ENCODE measurements at regions of chr6 and their contacts with region 1.

Region 1: DNA sequence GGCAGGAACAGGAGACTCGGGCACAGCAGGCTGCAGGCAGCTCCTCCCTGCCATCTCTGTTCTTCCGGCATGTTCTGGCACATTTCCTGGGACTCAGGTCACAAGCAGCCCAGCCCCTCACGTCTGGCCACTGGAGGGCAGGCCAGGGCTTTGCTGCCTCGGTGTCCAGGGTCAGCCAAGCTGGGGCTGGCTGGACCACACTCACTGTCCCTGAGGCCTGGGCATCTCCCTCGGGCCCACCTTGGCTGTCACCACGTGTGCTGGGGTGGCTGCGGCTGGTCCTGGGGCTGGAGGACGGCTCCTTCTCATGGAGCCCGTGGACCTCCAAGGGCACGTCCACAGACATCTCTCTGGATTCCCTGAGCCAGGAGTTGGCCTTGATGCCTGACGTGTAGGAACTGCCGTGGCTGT is 18.5 kb downstream of the FRMD1 start:
- DNase-seq: no peak
- ATAC-seq: peak; percentile 71
- H3K4me3 ChIP-seq: no peak overlapping the region
- H3K27ac ChIP-seq: no peak overlapping the region; the same call in 1 of the 2 replicates
- H3K4me1 ChIP-seq: no peaks in the 10 kb centered on the region
- H3K27me3 ChIP-seq: no peaks in the 10 kb centered on the region
- CTCF ChIP-seq: peak; percentile 34 to 67 (median 55); a peak in 5 of 6 replicates
- POLR2A ChIP-seq: no peak
- RAD21 ChIP-seq: peak; percentile 73

Region 2: DNA sequence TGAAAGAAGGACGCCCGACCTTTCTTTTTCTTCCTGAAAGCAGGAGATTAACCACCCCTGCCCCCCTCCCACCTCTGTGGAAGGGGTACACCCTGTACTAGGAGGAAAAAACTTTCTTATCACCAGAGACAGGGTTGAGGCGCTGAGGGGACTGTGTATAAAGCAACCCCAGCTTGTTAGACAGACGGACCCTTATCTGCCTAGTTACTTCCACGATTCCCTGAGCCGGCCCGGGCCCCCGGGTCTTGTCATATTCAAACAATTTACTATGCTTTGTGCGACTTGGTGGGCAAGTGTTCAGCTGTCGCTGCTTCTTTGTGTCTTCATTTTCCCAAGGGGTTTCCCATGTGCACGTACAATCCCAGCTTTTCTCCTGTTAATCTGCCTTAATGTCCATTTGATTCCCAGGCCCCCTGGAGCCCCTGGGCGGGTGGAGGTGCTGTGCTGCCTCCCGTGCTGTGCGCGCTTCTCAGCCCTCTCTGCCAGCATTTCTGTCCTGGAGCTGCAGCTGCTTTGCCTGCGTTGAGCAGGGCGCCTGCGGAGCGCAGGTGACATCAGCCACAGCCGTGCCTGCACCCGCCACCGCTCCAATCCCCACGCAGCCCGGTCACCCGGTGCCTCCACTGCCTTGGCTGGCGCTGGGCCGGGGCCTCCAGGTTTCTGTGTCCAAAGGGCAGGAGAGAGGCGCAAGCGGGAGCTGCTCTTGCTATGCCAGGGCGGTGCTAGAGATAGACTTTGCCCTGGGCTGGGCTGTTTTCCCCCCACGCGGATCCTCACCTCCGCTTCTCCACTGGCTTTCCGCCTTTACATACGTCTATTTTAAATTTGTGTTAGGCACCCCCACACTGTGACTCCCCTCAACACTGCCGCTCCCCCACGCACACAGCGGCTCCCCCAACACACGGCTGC is 639.4 kb before region 1 on chr6:
- CTCF ChIA-PET with region 1: no interaction called
- POLR2A ChIA-PET with region 1: no interaction called
- RAD21 ChIA-PET with region 1: no interaction called
- intact Hi-C with region 1: no loop called
- DNase-seq: no peak
- ATAC-seq: no peak
- H3K4me3 ChIP-seq: no peak overlapping the region
- H3K27ac ChIP-seq: no peak overlapping the region
- H3K4me1 ChIP-seq: no peaks in the 10 kb centered on the region
- H3K27me3 ChIP-seq: peaks cover 29% of the 10 kb centered on the region; the same call in 1 of the 2 replicates
- CTCF ChIP-seq: no peak
- POLR2A ChIP-seq: no peak
- RAD21 ChIP-seq: no peak

Region 3: DNA sequence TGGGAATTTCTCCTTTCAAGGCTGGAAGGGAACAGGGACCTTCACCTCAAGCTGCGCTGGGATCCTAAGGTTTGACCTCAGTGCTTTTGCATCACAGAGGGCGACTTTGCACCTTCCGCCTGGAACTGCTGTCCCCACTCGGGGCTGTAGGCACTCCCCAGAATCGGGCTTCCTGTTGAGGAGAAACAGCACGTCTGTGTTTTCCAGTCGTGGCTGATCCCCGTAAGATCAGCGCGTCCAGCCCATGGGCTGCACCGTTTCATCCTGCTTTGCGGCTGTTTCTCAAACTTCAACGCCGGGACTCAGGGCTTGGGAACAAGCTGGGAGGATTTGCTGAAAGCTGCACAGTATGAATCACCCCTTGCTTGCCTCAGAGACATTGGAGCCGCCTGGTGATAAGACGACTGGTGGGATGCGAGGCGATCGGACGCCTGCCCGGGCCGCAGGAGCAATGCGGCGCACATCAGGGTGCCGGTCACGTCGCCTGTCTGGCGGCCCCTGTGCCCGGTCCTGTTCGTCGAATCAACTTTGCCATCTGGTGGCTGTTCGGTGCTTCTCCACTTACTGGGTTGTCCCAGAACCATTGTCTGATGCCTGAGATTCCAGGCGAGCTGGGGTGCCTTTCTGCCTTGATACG is 72.1 kb after region 1 on chr6:
- CTCF ChIA-PET with region 1: interaction called, 4 read pairs
- POLR2A ChIA-PET with region 1: no interaction called
- RAD21 ChIA-PET with region 1: no interaction called
- intact Hi-C with region 1: loop called (anchors 2 kb)
- DNase-seq: no peak
- ATAC-seq: peak; percentile 78
- H3K4me3 ChIP-seq: no peak overlapping the region
- H3K27ac ChIP-seq: no peak overlapping the region
- H3K4me1 ChIP-seq: no peaks in the 10 kb centered on the region
- H3K27me3 ChIP-seq: peaks cover 6% of the 10 kb centered on the region; the same call in 1 of the 2 replicates
- CTCF ChIP-seq: peak; percentile 29 to 39 (median 32); a peak in 5 of 6 replicates
- POLR2A ChIP-seq: no peak
- RAD21 ChIP-seq: peak; percentile 60